ENCODE measurements at regions of chr4 and their contacts with region 1.

Region 1: GRCh38 chr4:54675721-54676461 is 18.1 kb downstream of the KIT start:
- DNase-seq: no peak
- ATAC-seq: no peak
- H3K4me3 ChIP-seq: no peak overlapping the region
- H3K27ac ChIP-seq: no peak overlapping the region
- H3K4me1 ChIP-seq: no peaks in the 10 kb centered on the region
- H3K27me3 ChIP-seq: no peaks in the 10 kb centered on the region
- CTCF ChIP-seq: no peak

Region 2: GRCh38 chr4:53813998-53814397 is 861.9 kb before region 1 on chr4:
- CTCF ChIA-PET with region 1: interaction called, 12 read pairs
- POLR2A ChIA-PET with region 1: no interaction called
- in situ Hi-C with region 1: no loop called
- intact Hi-C with region 1: no loop called
- DNase-seq: no peak
- ATAC-seq: no peak
- H3K4me3 ChIP-seq: no peak overlapping the region
- H3K27ac ChIP-seq: no peak overlapping the region
- H3K4me1 ChIP-seq: no peaks in the 10 kb centered on the region
- H3K27me3 ChIP-seq: no peaks in the 10 kb centered on the region
- CTCF ChIP-seq: no peak

Region 3: GRCh38 chr4:54378461-54378860 is 297.4 kb before region 1 on chr4:
- CTCF ChIA-PET with region 1: no interaction called
- POLR2A ChIA-PET with region 1: no interaction called
- in situ Hi-C with region 1: no loop called
- intact Hi-C with region 1: no loop called
- DNase-seq: no peak
- ATAC-seq: no peak
- H3K4me3 ChIP-seq: no peak overlapping the region
- H3K27ac ChIP-seq: no peak overlapping the region
- H3K4me1 ChIP-seq: no peaks in the 10 kb centered on the region
- H3K27me3 ChIP-seq: no peaks in the 10 kb centered on the region
- CTCF ChIP-seq: no peak

Region 4: GRCh38 chr4:54566608-54567007 is 109.3 kb before region 1 on chr4:
- CTCF ChIA-PET with region 1: no interaction called
- POLR2A ChIA-PET with region 1: no interaction called
- in situ Hi-C with region 1: no loop called
- intact Hi-C with region 1: no loop called
- DNase-seq: no peak
- ATAC-seq: no peak
- H3K4me3 ChIP-seq: no peak overlapping the region
- H3K27ac ChIP-seq: no peak overlapping the region
- H3K4me1 ChIP-seq: no peaks in the 10 kb centered on the region
- H3K27me3 ChIP-seq: no peaks in the 10 kb centered on the region
- CTCF ChIP-seq: no peak

Region 5: GRCh38 chr4:54961357-54961975 is 285.6 kb after region 1 on chr4:
- CTCF ChIA-PET with region 1: no interaction called
- POLR2A ChIA-PET with region 1: no interaction called
- in situ Hi-C with region 1: no loop called
- intact Hi-C with region 1: loop called (anchors 10 kb)
- DNase-seq: peak; percentile 2
- ATAC-seq: peak; percentile 58; the same call in 1 of the 2 replicates
- H3K4me3 ChIP-seq: no peak overlapping the region
- H3K27ac ChIP-seq: no peak overlapping the region
- H3K4me1 ChIP-seq: no peaks in the 10 kb centered on the region
- H3K27me3 ChIP-seq: no peaks in the 10 kb centered on the region
- CTCF ChIP-seq: peak; percentile 57

Region 6: DNA sequence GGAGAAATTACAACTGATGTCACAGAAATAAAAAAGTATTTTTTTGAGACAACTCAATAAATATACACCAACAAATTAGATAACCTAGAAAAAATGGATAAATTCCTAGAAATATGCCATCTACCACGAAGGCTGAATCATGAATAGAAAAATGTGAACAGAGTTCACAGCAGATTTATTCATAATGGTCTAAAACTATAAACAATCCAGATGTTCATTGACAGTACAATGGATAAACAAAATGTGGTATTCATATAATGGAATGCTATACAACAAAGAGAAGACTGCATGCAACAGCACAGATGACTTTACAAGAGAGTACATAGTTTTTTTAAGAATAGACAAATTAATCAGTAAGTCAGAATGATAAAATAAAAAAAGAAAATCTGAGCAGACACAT is 815.6 kb after region 1 on chr4:
- CTCF ChIA-PET with region 1: no interaction called
- POLR2A ChIA-PET with region 1: no interaction called
- in situ Hi-C with region 1: no loop called
- intact Hi-C with region 1: no loop called
- DNase-seq: no peak
- ATAC-seq: no peak
- H3K4me3 ChIP-seq: no peak overlapping the region
- H3K27ac ChIP-seq: no peak overlapping the region
- H3K4me1 ChIP-seq: no peaks in the 10 kb centered on the region
- H3K27me3 ChIP-seq: no peaks in the 10 kb centered on the region
- CTCF ChIP-seq: no peak